Mammary epithelial cell (primary cell): ENCODE measurements at regions of chr16 and their contacts with region 1.

Region 1: GRCh38 chr16:23435500-23435899 is 17.5 kb downstream of the COG7 start:
- DNase-seq: peak; percentile 34
- H3K4me3 ChIP-seq: no peak overlapping the region
- H3K27ac ChIP-seq: no peak overlapping the region
- H3K4me1 ChIP-seq: no peaks in the 10 kb centered on the region
- H3K27me3 ChIP-seq: no peaks in the 10 kb centered on the region
- CTCF ChIP-seq: peak; percentile 87 to 97

Region 2: GRCh38 chr16:22898874-22899348 is 536.6 kb before region 1 on chr16:
- CTCF ChIA-PET with region 1: no interaction called
- dilution Hi-C with region 1: no loop called
- in situ Hi-C with region 1: no loop called
- intact Hi-C with region 1: loop called (anchors 5 kb)
- DNase-seq: peak; percentile 67
- H3K4me3 ChIP-seq: no peak overlapping the region
- H3K27ac ChIP-seq: no peak overlapping the region
- H3K4me1 ChIP-seq: peaks cover 22% of the 10 kb centered on the region
- H3K27me3 ChIP-seq: no peaks in the 10 kb centered on the region
- CTCF ChIP-seq: peak; percentile 80 to 90

Region 3: DNA sequence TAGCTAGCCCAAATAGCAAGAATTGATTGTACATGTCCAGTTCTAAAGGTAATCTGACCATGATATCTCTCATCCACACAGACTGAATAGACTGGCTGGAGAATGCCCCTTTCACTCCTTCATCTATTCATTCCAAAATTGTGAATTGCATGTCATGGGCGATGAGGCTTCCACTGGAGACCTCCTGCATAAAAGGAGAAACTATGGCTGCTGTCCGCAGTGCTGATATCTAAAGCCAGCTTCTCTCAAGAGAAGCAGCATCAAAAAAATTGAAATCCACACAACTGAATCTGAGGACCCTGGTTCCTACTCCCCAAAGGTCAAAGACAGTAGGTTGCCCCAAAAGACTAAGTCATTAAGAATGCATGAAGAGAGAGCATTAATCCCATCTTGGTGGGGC is 260.9 kb before region 1 on chr16:
- CTCF ChIA-PET with region 1: interaction called, 4 read pairs
- dilution Hi-C with region 1: no loop called
- in situ Hi-C with region 1: loop called in 1 of 2 experiments (anchors 5 kb)
- intact Hi-C with region 1: no loop called
- DNase-seq: no peak
- H3K4me3 ChIP-seq: no peak overlapping the region
- H3K27ac ChIP-seq: no peak overlapping the region
- H3K4me1 ChIP-seq: peaks cover 13% of the 10 kb centered on the region
- H3K27me3 ChIP-seq: no peaks in the 10 kb centered on the region
- CTCF ChIP-seq: no peak

Region 4: DNA sequence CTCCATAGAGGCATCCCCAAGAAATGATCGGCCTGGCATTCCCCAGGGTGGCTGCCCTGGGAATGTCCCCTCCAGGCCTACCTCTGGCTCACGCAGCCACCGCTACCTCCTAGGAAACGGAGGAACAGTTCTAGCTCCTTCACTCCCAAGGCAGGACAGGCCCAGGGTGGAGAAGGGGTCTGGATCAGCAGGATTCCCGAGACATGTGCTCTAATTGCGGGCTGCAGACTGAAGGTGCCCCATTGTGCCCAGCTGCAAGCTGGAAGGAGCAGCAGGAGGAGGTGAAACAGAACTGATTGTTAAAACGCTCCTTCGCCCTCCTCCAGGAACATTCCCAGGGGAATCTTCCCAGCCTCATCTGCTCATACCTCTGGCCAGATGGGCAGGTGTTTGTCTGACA is 212.1 kb before region 1 on chr16:
- CTCF ChIA-PET with region 1: interaction called, 13 read pairs
- dilution Hi-C with region 1: no loop called
- in situ Hi-C with region 1: no loop called
- intact Hi-C with region 1: no loop called
- DNase-seq: no peak
- H3K4me3 ChIP-seq: no peak overlapping the region
- H3K27ac ChIP-seq: no peak overlapping the region
- H3K4me1 ChIP-seq: no peaks in the 10 kb centered on the region
- H3K27me3 ChIP-seq: no peaks in the 10 kb centered on the region
- CTCF ChIP-seq: no peak

Region 5: GRCh38 chr16:23504451-23505179 is 69.1 kb after region 1 on chr16:
- CTCF ChIA-PET with region 1: interaction called, 4 read pairs
- dilution Hi-C with region 1: no loop called
- in situ Hi-C with region 1: no loop called
- intact Hi-C with region 1: loop called (anchors 5 kb)
- DNase-seq: peak; percentile 96
- H3K4me3 ChIP-seq: no peak overlapping the region
- H3K27ac ChIP-seq: peak overlapping the region; percentile 8
- H3K4me1 ChIP-seq: peaks cover 37% of the 10 kb centered on the region
- H3K27me3 ChIP-seq: no peaks in the 10 kb centered on the region
- CTCF ChIP-seq: no peak

Region 6: DNA sequence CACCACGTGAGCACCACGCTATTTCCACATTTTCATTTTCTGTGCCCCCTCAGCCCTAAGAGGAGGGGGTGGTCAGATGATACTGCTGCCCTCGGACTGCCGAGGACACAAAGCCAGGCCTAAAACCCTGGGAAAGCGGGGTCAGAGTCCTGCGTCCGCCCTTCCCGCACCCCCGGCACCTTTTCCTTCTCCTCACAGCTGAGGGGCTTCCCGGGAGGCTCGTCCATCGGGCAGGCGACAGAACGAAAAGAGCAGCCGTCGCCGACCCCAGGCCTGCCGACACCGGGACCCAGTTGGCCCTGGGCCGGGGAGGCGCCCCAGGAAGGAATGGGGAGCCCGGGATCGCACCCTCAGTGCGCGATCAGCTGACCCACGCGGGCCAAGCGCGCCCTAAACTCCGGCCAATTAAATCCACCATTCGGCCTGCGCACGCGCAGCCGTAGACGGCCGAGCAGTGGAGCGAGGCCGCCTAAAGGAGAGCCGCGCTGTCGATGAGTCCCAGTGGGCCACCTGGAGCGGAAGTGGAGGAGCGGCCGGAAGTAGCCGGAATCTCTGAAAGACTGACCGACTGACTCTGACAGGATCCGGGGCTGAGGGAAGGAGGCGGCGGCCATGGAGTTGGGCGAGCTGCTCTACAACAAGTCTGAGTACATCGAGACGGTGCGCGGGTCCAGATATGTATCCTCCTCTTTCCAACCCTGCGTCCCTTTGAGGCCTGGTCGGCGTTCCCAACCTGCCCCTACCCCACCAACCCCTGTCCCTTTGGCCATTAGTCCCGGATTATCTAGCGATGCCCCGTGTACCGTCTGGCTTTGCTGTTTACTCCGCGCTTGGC is 205.6 kb after region 1 on chr16 and contains the starts of genes DCTN5 and PALB2:
- CTCF ChIA-PET with region 1: no interaction called
- dilution Hi-C with region 1: no loop called
- in situ Hi-C with region 1: no loop called
- intact Hi-C with region 1: no loop called
- DNase-seq: peak; percentile 96
- H3K4me3 ChIP-seq: peak within 1 kb of the TSS; percentile 99 to 100 (median 100)
- H3K27ac ChIP-seq: peak within 1 kb of the TSS; percentile 82
- H3K4me1 ChIP-seq: peaks cover 16% of the 10 kb centered on the region
- H3K27me3 ChIP-seq: no peaks in the 10 kb centered on the region
- CTCF ChIP-seq: no peak
- total RNA-seq, gene DCTN5: 67.8 to 72.4 TPM
- total RNA-seq, gene PALB2: 17.7 to 23.1 TPM